Mammary epithelial cell (primary cell): ENCODE measurements at regions of chr6 and their contacts with region 1.

Region 1: GRCh38 chr6:168956884-168957730 is 296.5 kb downstream of the THBS2 start:
- DNase-seq: peak; percentile 64
- H3K4me3 ChIP-seq: no peak overlapping the region
- H3K27ac ChIP-seq: no peak overlapping the region
- H3K4me1 ChIP-seq: no peaks in the 10 kb centered on the region
- H3K27me3 ChIP-seq: no peaks in the 10 kb centered on the region
- CTCF ChIP-seq: peak; percentile 85 to 89

Region 2: GRCh38 chr6:168916576-168917207 is 40.4 kb before region 1 on chr6:
- CTCF ChIA-PET with region 1: no interaction called
- dilution Hi-C with region 1: loop called (anchors 5 kb)
- in situ Hi-C with region 1: no loop called
- intact Hi-C with region 1: no loop called
- DNase-seq: no peak
- H3K4me3 ChIP-seq: no peak overlapping the region
- H3K27ac ChIP-seq: no peak overlapping the region
- H3K4me1 ChIP-seq: no peaks in the 10 kb centered on the region
- H3K27me3 ChIP-seq: no peaks in the 10 kb centered on the region
- CTCF ChIP-seq: no peak

Region 3: GRCh38 chr6:169070506-169071176 is 113.5 kb after region 1 on chr6:
- CTCF ChIA-PET with region 1: no interaction called
- dilution Hi-C with region 1: no loop called
- in situ Hi-C with region 1: no loop called
- intact Hi-C with region 1: no loop called
- DNase-seq: peak; percentile 98
- H3K4me3 ChIP-seq: no peak overlapping the region
- H3K27ac ChIP-seq: peak overlapping the region; percentile 30
- H3K4me1 ChIP-seq: peaks cover 19% of the 10 kb centered on the region
- H3K27me3 ChIP-seq: no peaks in the 10 kb centered on the region
- CTCF ChIP-seq: peak in 1 of 2 donors; percentile 8

Region 4: GRCh38 chr6:169326067-169326799 is 369.1 kb after region 1 on chr6:
- CTCF ChIA-PET with region 1: no interaction called
- dilution Hi-C with region 1: no loop called
- in situ Hi-C with region 1: no loop called
- intact Hi-C with region 1: loop called (anchors 1 kb)
- DNase-seq: peak; percentile 52
- H3K4me3 ChIP-seq: no peak overlapping the region
- H3K27ac ChIP-seq: no peak overlapping the region
- H3K4me1 ChIP-seq: peaks cover 7% of the 10 kb centered on the region
- H3K27me3 ChIP-seq: no peaks in the 10 kb centered on the region
- CTCF ChIP-seq: peak; percentile 19 to 54

Region 5: GRCh38 chr6:169520104-169520503 is 563.0 kb after region 1 on chr6:
- CTCF ChIA-PET with region 1: no interaction called
- dilution Hi-C with region 1: no loop called
- in situ Hi-C with region 1: no loop called
- intact Hi-C with region 1: loop called (anchors 1 kb)
- DNase-seq: no peak
- H3K4me3 ChIP-seq: no peak overlapping the region
- H3K27ac ChIP-seq: no peak overlapping the region
- H3K4me1 ChIP-seq: no peaks in the 10 kb centered on the region
- H3K27me3 ChIP-seq: no peaks in the 10 kb centered on the region
- CTCF ChIP-seq: peak; percentile 29 to 45

Region 6: GRCh38 chr6:169604076-169604475 is 647.0 kb after region 1 on chr6:
- CTCF ChIA-PET with region 1: no interaction called
- dilution Hi-C with region 1: no loop called
- in situ Hi-C with region 1: no loop called
- intact Hi-C with region 1: no loop called
- DNase-seq: no peak
- H3K4me3 ChIP-seq: no peak overlapping the region
- H3K27ac ChIP-seq: no peak overlapping the region
- H3K4me1 ChIP-seq: no peaks in the 10 kb centered on the region
- H3K27me3 ChIP-seq: no peaks in the 10 kb centered on the region
- CTCF ChIP-seq: no peak

Region 7: DNA sequence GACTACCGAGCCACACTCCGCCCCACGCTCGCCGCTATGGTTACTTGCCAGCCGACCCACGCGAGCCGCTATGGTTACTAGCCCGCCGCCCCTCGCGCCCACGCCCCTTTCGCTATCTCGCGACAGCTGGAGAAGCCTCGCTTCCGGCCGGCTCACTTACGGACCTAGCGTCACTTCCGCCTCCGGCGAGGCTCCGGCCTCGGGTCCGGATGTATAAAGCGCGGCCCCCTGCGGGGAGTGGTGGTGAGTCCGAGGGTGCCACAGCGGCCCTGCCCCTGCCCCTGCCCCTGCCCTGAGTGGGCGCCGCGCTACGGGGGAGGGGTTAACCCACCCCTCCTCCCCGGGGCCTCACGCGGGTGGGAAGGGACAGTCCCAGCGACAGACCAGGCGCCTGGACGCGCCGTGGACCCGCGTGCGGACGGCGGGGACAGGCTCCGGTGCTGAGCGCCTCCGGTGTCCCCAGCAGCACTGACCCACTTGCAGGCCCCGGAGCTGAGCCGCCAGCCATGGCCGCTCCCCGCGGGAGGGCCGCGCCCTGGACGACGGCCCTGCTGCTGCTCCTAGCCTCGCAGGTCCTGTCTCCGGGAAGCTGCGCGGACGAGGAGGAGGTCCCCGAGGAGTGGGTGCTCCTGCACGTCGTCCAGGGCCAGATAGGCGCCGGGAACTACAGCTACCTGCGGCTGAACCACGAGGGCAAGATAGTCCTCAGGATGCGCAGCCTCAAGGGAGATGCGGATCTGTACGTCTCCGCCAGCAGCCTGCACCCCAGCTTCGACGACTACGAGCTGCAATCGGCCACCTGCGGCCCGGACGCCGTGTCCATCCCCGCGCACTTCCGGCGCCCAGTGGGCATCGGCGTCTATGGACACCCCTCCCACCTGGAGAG is 745.1 kb after region 1 on chr6 and contains the starts of genes C6orf120 and WDR27:
- CTCF ChIA-PET with region 1: no interaction called
- dilution Hi-C with region 1: no loop called
- in situ Hi-C with region 1: no loop called
- intact Hi-C with region 1: loop called (anchors 2 kb)
- DNase-seq: peak; percentile 95
- H3K4me3 ChIP-seq: peak within 1 kb of the TSS; percentile 77 to 95 (median 80)
- H3K27ac ChIP-seq: peak within 1 kb of the TSS; percentile 80
- H3K4me1 ChIP-seq: peaks cover 33% of the 10 kb centered on the region
- H3K27me3 ChIP-seq: no peaks in the 10 kb centered on the region
- CTCF ChIP-seq: no peak
- total RNA-seq, gene C6orf120: 22.0 to 26.0 TPM
- total RNA-seq, gene WDR27: 21.7 to 50.2 TPM

Region 8: DNA sequence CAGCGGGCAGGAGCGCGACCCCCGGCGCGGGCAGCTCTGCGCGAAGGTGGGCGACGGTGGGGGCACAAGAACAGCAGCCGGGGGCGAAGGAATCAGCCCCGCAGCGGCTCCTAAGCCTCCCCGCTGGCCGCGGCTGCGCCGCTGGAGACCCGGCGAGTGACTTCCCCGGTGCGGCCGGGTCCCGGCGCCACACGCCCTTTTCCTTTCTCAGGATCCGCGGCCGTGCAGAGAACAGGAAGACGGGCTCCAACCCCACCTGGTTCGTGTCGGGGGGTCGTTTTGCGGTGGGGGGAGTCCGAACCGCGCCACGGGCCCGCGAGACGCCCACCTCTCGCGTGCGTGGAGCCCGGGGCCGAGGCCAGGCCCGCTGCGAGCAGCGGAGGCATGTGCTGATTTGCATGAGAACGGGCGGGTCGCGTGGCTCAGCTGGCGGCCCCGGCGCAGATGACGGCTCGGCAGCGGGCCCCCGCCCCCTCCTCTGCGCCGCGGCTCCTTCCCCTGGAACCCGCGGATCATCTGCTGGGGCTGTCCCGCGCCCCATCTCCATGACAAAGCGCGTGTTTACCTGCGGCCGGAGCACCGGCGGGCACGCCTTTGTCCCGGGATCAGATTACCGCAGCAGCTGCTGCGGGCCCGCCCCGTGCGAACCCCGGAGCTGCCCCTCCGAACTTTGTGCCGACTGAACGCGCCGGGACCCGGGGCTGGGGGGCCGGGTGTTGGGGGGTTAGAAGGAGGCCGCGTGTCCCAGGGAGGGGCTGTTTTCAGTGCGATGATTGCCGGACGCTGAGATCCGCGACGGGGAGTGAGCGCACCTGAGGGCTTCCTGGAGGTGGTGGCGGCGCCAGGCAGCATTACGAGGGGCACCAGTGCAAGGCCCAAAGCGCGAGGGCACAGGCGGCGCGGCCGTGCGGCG is 1338.7 kb after region 1 on chr6:
- CTCF ChIA-PET with region 1: interaction called, 21 read pairs
- dilution Hi-C with region 1: no loop called
- in situ Hi-C with region 1: no loop called
- intact Hi-C with region 1: no loop called
- DNase-seq: peak; percentile 59
- H3K4me3 ChIP-seq: peak overlapping the region; percentile 56 to 64 (median 57)
- H3K27ac ChIP-seq: peak overlapping the region; percentile 9
- H3K4me1 ChIP-seq: peaks cover 28% of the 10 kb centered on the region
- H3K27me3 ChIP-seq: no peaks in the 10 kb centered on the region
- CTCF ChIP-seq: no peak